Mammary epithelial cell (primary cell): ENCODE measurements at regions of chr3 and their contacts with region 1.

Region 1: GRCh38 chr3:173553635-173554280 is 156.2 kb downstream of the NLGN1 start:
- DNase-seq: peak; percentile 4
- H3K4me3 ChIP-seq: no peak overlapping the region
- H3K27ac ChIP-seq: no peak overlapping the region
- H3K4me1 ChIP-seq: no peaks in the 10 kb centered on the region
- H3K27me3 ChIP-seq: no peaks in the 10 kb centered on the region
- CTCF ChIP-seq: peak; percentile 70 to 85

Region 2: DNA sequence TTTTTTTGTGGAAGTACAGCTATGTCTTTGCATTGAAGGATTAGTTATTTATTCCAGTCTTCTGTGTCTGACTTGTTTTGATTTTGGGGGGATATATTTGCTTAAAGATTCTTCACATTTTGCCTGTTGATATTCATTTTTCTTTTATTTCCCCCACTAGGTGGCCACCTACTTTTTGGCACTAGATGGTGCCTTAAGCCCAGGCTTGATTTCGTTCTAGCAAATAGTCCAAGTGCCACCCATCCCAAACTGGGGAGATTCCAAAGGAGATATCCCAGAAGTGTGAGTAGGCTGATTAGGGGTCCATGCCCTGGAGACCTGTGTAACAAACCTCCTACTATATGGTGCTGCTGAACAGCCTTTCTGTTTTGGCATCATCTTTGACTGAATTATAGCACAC is 332.7 kb before region 1 on chr3:
- CTCF ChIA-PET with region 1: no interaction called
- dilution Hi-C with region 1: no loop called
- in situ Hi-C with region 1: no loop called
- intact Hi-C with region 1: loop called (anchors 10 kb)
- DNase-seq: peak; percentile 1
- H3K4me3 ChIP-seq: no peak overlapping the region
- H3K27ac ChIP-seq: no peak overlapping the region
- H3K4me1 ChIP-seq: no peaks in the 10 kb centered on the region
- H3K27me3 ChIP-seq: no peaks in the 10 kb centered on the region
- CTCF ChIP-seq: peak; percentile 44 to 47

Region 3: GRCh38 chr3:173371848-173372487 is 181.8 kb before region 1 on chr3:
- CTCF ChIA-PET with region 1: no interaction called
- dilution Hi-C with region 1: no loop called
- in situ Hi-C with region 1: no loop called
- intact Hi-C with region 1: loop called (anchors 1 kb)
- DNase-seq: peak; percentile 9
- H3K4me3 ChIP-seq: no peak overlapping the region
- H3K27ac ChIP-seq: no peak overlapping the region
- H3K4me1 ChIP-seq: no peaks in the 10 kb centered on the region
- H3K27me3 ChIP-seq: no peaks in the 10 kb centered on the region
- CTCF ChIP-seq: peak; percentile 52 to 73

Region 4: GRCh38 chr3:173411375-173411973 is 142.3 kb before region 1 on chr3:
- CTCF ChIA-PET with region 1: no interaction called
- dilution Hi-C with region 1: no loop called
- in situ Hi-C with region 1: no loop called
- intact Hi-C with region 1: loop called (anchors 1 kb)
- DNase-seq: peak; percentile 1
- H3K4me3 ChIP-seq: no peak overlapping the region
- H3K27ac ChIP-seq: no peak overlapping the region
- H3K4me1 ChIP-seq: no peaks in the 10 kb centered on the region
- H3K27me3 ChIP-seq: peaks cover 2% of the 10 kb centered on the region
- CTCF ChIP-seq: peak; percentile 19 to 49

Region 5: DNA sequence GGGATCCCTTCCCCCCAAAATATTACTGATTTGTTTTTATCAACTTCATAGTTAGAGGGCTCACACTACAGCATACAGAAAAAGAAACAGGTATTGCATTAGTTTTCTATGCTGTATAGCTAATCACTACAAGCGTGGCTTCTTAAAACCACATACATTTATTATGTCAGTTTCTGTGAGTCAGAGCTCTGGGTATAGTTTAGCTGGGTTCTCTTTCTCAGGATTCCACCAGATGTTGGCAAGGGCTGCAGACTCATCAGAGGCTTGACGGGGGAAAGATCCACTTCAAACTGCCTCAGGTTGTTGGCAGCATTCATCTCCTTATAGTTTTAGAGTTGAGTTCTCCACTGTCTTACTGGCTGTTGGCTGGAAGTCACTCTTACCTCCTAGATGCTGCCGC is 171.7 kb after region 1 on chr3:
- CTCF ChIA-PET with region 1: no interaction called
- dilution Hi-C with region 1: no loop called
- in situ Hi-C with region 1: no loop called
- intact Hi-C with region 1: no loop called
- DNase-seq: peak; percentile 59
- H3K4me3 ChIP-seq: no peak overlapping the region
- H3K27ac ChIP-seq: no peak overlapping the region
- H3K4me1 ChIP-seq: no peaks in the 10 kb centered on the region
- H3K27me3 ChIP-seq: no peaks in the 10 kb centered on the region
- CTCF ChIP-seq: no peak

Region 6: GRCh38 chr3:173913397-173913796 is 359.6 kb after region 1 on chr3:
- CTCF ChIA-PET with region 1: no interaction called
- dilution Hi-C with region 1: no loop called
- in situ Hi-C with region 1: no loop called
- intact Hi-C with region 1: no loop called
- DNase-seq: no peak
- H3K4me3 ChIP-seq: no peak overlapping the region
- H3K27ac ChIP-seq: no peak overlapping the region
- H3K4me1 ChIP-seq: no peaks in the 10 kb centered on the region
- H3K27me3 ChIP-seq: no peaks in the 10 kb centered on the region
- CTCF ChIP-seq: no peak